Activated naive CD4-positive, alpha-beta T cell treated with anti-CD3 and anti-CD28 coated beads for 36 hours (primary cell): ENCODE measurements at regions of chr12 and their contacts with region 1.

Region 1: DNA sequence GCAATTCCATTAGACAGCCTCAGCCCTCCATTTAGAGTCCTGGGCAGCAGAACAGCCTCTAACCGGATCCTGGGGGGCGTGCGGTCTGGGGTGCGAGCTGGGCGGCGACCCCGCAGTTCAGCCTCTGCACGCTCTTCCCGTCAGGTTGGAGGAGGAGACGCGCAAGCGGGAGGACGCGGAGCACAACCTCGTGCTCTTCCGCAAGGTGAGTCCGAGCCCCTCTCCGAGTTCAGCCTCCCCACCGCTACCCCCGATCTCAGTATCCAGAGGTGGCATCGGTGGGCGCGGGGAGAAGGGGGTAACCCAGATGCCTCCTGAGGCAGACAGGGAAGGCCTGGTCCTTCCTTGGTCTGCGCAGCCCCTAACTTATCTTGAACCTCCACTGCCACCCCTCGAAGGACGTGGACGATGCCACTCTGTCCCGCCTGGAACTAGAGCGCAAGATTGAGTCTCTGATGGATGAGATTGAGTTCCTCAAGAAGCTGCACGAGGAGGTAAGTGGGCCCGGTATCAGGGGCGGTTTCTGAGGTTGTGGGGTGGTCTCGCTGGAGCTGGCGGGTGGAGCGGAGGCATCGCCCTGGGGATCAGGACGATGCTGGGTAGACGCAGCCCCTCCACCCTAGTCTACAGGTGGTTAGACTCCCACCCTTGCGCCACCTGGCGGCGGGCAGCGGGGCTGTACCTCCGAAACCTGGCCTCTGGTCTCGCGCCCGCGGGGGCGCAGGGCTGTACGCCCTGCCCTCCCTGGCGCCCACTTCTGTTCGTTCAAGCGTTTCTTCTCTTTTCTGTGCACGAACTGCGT is 1.3 kb downstream of the PRPH start:
- DNase-seq: peak; percentile 70
- H3K4me3 Mint-ChIP-seq: peak overlapping the region; percentile 50
- H3K27ac Mint-ChIP-seq: no peak overlapping the region
- H3K4me1 Mint-ChIP-seq: peaks cover 12% of the 10 kb centered on the region
- H3K27me3 Mint-ChIP-seq: peaks cover 54% of the 10 kb centered on the region

Region 2: GRCh38 chr12:49227713-49228112 is 68.5 kb before region 1 on chr12:
- CTCF ChIA-PET with region 1: no interaction called
- intact Hi-C with region 1: no loop called
- DNase-seq: no peak
- H3K4me3 Mint-ChIP-seq: no peak overlapping the region
- H3K27ac Mint-ChIP-seq: no peak overlapping the region
- H3K4me1 Mint-ChIP-seq: no peaks in the 10 kb centered on the region
- H3K27me3 Mint-ChIP-seq: no peaks in the 10 kb centered on the region

Region 3: DNA sequence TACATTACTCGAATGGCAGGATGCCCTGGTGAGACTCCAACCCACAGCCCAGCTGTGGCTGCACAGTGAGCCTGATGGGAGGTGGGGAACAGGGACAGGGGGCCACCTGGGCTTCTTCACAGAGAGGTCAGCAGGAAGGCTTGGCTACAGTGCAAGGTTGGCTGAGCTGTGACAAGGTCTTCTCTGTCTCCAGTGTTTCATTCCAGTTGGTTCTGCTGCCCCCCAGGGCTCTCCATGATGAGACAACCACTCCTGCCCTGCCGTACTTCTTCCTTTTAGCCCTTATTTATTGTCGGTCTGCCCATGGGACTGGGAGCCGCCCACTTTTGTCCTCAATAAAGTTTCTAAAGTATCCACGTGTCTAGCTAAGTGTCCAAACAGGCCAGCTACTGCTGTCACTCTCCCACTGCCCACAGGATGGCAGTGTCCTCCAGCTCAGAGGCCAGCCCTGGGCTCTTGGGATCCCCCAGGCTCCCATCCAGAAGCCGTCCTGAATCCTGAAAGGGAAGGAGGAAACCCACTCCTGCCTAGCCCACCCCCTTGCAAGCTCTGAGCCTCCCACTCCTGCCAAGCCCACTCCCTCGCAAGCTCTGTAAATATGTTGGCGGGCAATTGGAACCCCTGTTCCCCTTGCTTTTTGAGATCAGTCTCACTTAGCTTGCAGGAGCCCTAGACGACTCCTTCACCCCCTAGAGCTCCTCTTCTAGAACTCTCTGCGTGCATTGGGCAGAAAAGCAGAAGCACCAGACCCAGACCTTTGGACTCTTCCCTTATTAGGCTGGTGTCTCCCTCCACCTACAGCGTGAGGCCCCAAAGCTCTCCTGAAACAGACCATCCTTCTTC is 35.4 kb after region 1 on chr12:
- CTCF ChIA-PET with region 1: interaction called, 66 read pairs
- intact Hi-C with region 1: no loop called
- DNase-seq: no peak
- H3K4me3 Mint-ChIP-seq: no peak overlapping the region
- H3K27ac Mint-ChIP-seq: no peak overlapping the region
- H3K4me1 Mint-ChIP-seq: peaks cover 12% of the 10 kb centered on the region
- H3K27me3 Mint-ChIP-seq: peaks cover 41% of the 10 kb centered on the region

Region 4: GRCh38 chr12:49336645-49337584 is 40.7 kb after region 1 on chr12 and contains the start of gene C1QL4:
- CTCF ChIA-PET with region 1: interaction called, 153 read pairs
- intact Hi-C with region 1: loop called (anchors 1 kb)
- DNase-seq: peak; percentile 90
- H3K4me3 Mint-ChIP-seq: peak within 1 kb of the TSS; percentile 57
- H3K27ac Mint-ChIP-seq: no peak within 1 kb of the TSS
- H3K4me1 Mint-ChIP-seq: peaks cover 25% of the 10 kb centered on the region
- H3K27me3 Mint-ChIP-seq: peaks cover 78% of the 10 kb centered on the region
- total RNA-seq, gene C1QL4: not detected

Region 5: DNA sequence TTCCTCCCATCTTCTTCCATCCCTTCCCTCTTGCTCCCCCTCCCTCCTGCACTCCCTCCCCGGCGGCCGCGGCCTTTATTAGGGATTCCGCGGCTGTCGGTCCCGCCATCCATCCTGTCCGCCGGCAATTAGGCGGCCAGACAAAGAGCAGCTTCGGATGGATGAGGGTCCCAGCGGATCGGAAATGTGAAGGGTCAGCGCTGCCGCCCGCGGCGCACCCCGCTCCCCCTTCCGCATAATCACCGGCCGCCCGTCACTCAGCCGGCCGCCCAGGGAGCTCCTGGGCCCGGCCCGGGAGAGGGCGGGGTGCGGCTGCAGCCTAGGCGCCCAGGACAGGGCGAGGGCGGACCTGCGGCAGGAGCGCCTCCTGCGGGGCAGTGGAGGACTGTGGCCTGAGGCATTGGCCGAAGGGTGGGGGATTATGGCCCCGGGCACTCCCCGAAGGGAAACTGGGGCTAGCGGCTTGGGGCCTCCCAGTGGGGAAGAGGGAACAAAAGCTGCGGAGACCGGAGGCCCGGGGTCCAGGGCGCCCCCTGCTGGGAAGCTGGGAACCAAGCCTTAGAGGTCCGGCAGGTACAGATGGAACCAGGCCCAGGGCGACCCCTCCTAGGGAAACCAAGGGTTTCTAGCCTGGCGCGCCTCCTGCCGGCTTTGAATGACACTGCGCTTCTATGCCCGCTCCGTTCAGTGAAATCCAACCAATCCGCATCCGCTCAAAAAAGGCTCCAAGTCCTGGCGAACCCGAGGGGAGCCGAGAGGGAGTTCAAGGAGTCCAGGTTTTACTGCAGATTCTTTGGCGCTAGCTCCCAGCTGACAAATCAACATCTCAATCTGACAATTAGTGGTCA is 46.1 kb after region 1 on chr12:
- CTCF ChIA-PET with region 1: interaction called, 153 read pairs
- intact Hi-C with region 1: loop called (anchors 1 kb)
- DNase-seq: peak; percentile 90
- H3K4me3 Mint-ChIP-seq: no peak overlapping the region
- H3K27ac Mint-ChIP-seq: no peak overlapping the region
- H3K4me1 Mint-ChIP-seq: peaks cover 48% of the 10 kb centered on the region
- H3K27me3 Mint-ChIP-seq: peaks cover 78% of the 10 kb centered on the region

Region 6: GRCh38 chr12:49347384-49348237 is 51.4 kb after region 1 on chr12:
- CTCF ChIA-PET with region 1: interaction called, 153 read pairs
- intact Hi-C with region 1: loop called (anchors 1 kb)
- DNase-seq: peak; percentile 77
- H3K4me3 Mint-ChIP-seq: peak overlapping the region; percentile 58
- H3K27ac Mint-ChIP-seq: no peak overlapping the region
- H3K4me1 Mint-ChIP-seq: peaks cover 41% of the 10 kb centered on the region
- H3K27me3 Mint-ChIP-seq: peaks cover 58% of the 10 kb centered on the region

Region 7: GRCh38 chr12:49515266-49515665 is 219.0 kb after region 1 on chr12:
- CTCF ChIA-PET with region 1: interaction called, 20 read pairs
- intact Hi-C with region 1: no loop called
- DNase-seq: no peak
- H3K4me3 Mint-ChIP-seq: no peak overlapping the region
- H3K27ac Mint-ChIP-seq: no peak overlapping the region
- H3K4me1 Mint-ChIP-seq: peaks cover 9% of the 10 kb centered on the region
- H3K27me3 Mint-ChIP-seq: no peaks in the 10 kb centered on the region